Activated naive CD4-positive, alpha-beta T cell treated with anti-CD3 and anti-CD28 coated beads, Interleukin-2, amount 10 ng/mL, durations not matched to agents 7 days and 5 days (primary cell): ENCODE measurements at regions of chr5 and their contacts with region 1.

Region 1: GRCh38 chr5:178075840-178076548 is 37.3 kb upstream of the N4BP3 start:
- DNase-seq: peak; percentile 89
- H3K4me3 Mint-ChIP-seq: no peak overlapping the region
- H3K27ac Mint-ChIP-seq: no peak overlapping the region
- H3K4me1 Mint-ChIP-seq: peaks cover 5% of the 10 kb centered on the region
- H3K27me3 Mint-ChIP-seq: peaks cover 52% of the 10 kb centered on the region

Region 2: GRCh38 chr5:177478711-177479646 is 597.0 kb before region 1 on chr5:
- CTCF ChIA-PET with region 1: no interaction called
- DNase-seq: peak; percentile 49
- H3K4me3 Mint-ChIP-seq: no peak overlapping the region
- H3K27ac Mint-ChIP-seq: peak overlapping the region; percentile 88
- H3K4me1 Mint-ChIP-seq: peaks cover 45% of the 10 kb centered on the region
- H3K27me3 Mint-ChIP-seq: peaks cover 23% of the 10 kb centered on the region

Region 3: GRCh38 chr5:178090858-178091540 is 15.0 kb after region 1 on chr5:
- CTCF ChIA-PET with region 1: interaction called, 20 read pairs
- DNase-seq: no peak
- H3K4me3 Mint-ChIP-seq: no peak overlapping the region
- H3K27ac Mint-ChIP-seq: no peak overlapping the region
- H3K4me1 Mint-ChIP-seq: peaks cover 22% of the 10 kb centered on the region
- H3K27me3 Mint-ChIP-seq: peaks cover 32% of the 10 kb centered on the region

Region 4: GRCh38 chr5:178120868-178121357 is 44.9 kb after region 1 on chr5:
- CTCF ChIA-PET with region 1: interaction called, 23 read pairs
- DNase-seq: peak; percentile 92
- H3K4me3 Mint-ChIP-seq: no peak overlapping the region
- H3K27ac Mint-ChIP-seq: no peak overlapping the region
- H3K4me1 Mint-ChIP-seq: peaks cover 19% of the 10 kb centered on the region
- H3K27me3 Mint-ChIP-seq: peaks cover 62% of the 10 kb centered on the region

Region 5: GRCh38 chr5:178146020-178146820 is 70.2 kb after region 1 on chr5:
- CTCF ChIA-PET with region 1: interaction called, 118 read pairs
- DNase-seq: peak; percentile 85
- H3K4me3 Mint-ChIP-seq: no peak overlapping the region
- H3K27ac Mint-ChIP-seq: no peak overlapping the region
- H3K4me1 Mint-ChIP-seq: peaks cover 34% of the 10 kb centered on the region
- H3K27me3 Mint-ChIP-seq: no peaks in the 10 kb centered on the region

Region 6: GRCh38 chr5:178153573-178154343 is 77.8 kb after region 1 on chr5 and contains the start of gene NHP2:
- CTCF ChIA-PET with region 1: interaction called, 118 read pairs
- DNase-seq: peak; percentile 99
- H3K4me3 Mint-ChIP-seq: peak within 1 kb of the TSS; percentile 95
- H3K27ac Mint-ChIP-seq: peak within 1 kb of the TSS; percentile 90
- H3K4me1 Mint-ChIP-seq: peaks cover 52% of the 10 kb centered on the region
- H3K27me3 Mint-ChIP-seq: no peaks in the 10 kb centered on the region

Region 7: DNA sequence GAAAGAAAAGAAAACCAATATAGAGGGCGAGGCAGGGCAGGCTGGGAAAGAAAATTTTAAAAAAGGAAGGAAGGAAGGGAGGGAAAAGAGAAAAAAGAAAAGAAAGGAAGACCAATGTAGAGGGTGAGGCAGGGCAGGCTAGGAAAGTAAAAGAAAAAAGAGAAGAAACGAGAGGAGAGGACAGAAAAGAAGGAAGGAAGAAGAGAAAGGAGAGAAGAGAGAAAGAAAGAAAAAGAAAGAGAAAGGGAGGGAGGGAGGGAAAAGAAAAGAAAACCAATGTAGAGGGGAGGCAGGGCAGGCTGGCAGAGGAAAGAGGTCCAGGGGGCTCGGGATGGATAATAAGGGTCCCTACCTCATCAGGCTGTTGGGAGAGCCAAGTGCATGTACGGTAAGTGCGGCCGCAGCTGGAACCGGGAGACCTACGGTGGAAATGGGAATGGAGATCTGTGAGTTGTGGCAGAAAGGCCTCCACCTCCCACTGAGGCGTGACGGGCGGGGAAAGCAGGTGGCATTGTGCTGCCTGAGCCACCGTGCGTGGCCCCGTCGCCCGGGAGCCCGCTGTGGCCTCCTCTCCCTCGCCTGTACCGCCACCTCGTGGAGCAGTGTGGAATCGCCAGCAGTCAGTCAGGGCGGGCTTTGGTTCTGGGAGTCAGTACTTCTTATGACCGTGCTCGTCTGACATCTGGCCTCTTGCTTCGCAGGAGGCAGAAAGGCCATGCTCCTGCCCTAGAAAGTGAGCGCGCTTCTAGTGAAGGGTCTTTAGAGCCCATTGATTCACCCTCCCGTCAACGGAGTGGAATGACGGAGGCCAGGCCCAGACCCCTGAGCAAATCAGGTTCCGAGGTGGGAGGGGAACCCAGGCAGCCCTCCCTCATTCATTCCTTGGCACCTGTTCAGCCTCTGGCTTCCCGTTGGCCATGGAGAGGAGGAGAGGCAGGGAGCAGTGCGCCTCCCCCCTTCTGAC is 88.1 kb after region 1 on chr5:
- CTCF ChIA-PET with region 1: interaction called, 50 read pairs
- DNase-seq: peak; percentile 93
- H3K4me3 Mint-ChIP-seq: no peak overlapping the region
- H3K27ac Mint-ChIP-seq: no peak overlapping the region
- H3K4me1 Mint-ChIP-seq: peaks cover 11% of the 10 kb centered on the region
- H3K27me3 Mint-ChIP-seq: peaks cover 51% of the 10 kb centered on the region

Region 8: GRCh38 chr5:178170455-178170854 is 94.5 kb after region 1 on chr5:
- CTCF ChIA-PET with region 1: interaction called, 13 read pairs
- DNase-seq: no peak
- H3K4me3 Mint-ChIP-seq: no peak overlapping the region
- H3K27ac Mint-ChIP-seq: no peak overlapping the region
- H3K4me1 Mint-ChIP-seq: no peaks in the 10 kb centered on the region
- H3K27me3 Mint-ChIP-seq: peaks cover 10% of the 10 kb centered on the region